Posterior vena cava (tissue), 2 donors: ENCODE measurements at regions of chr17 and their contacts with region 1.

Region 1: GRCh38 chr17:44864866-44865660 is 17.4 kb downstream of the HIGD1B start:
- DNase-seq: no peak

Region 2: DNA sequence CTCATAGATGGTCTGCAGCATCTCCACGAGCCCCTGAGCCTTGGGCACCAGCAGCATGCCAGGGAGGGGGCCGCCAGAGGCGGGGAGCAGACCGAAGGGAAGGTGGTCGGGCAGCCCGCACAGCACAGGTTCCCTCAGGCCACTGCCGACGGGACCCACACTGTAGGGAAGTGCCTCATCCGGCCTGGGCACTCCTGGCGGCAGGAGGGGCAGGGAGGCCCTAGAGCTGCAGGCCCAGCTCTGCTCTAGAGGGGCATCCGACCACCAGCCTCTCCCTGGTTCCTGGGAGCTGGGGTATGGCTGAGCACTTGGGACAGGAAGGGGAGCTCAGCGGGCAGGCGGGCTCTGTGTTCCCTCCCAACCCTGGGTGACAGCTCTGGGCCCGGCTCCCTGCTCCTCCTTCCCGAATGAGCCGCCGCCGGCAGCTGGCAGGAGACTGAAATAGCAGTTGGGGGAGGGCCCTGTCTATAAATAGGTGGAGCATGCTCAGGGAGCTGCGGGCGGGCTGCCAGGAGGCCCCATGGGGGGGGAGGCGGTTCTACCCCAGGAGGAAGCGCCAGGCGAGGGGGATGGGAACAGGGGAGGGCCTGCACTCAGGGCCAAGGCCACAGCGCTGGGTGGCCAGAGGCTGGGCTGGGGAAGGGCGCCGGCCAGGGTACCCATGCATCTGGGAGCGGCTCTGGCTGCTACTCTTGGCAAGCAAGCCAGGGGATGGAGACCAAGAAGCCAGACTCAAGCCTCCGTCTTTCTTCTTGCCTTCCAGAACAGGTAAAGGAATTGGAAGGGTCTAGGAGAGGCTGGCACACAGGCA is 754.0 kb before region 1 on chr17:
- intact Hi-C with region 1: loop called in 1 of 2 experiments (anchors 5 kb)
- DNase-seq: peak; percentile 99